Activated CD4-positive, alpha-beta memory T cell treated with anti-CD3 and anti-CD28 coated beads, Interleukin-2, amount 10 ng/mL, durations not matched to agents 7 days and 5 days (primary cell): ENCODE measurements at regions of chr3 and their contacts with region 1.

Region 1: GRCh38 chr3:179071550-179072397 is at the start of gene ZMAT3:
- DNase-seq: peak; percentile 84
- H3K4me3 Mint-ChIP-seq: peak within 1 kb of the TSS; percentile 96
- H3K27ac Mint-ChIP-seq: peak within 1 kb of the TSS; percentile 87
- H3K4me1 Mint-ChIP-seq: peaks cover 49% of the 10 kb centered on the region
- H3K27me3 Mint-ChIP-seq: no peaks in the 10 kb centered on the region
- total RNA-seq, gene ZMAT3: 12.3 to 13.9 TPM

Region 2: GRCh38 chr3:178762385-178762784 is 309.4 kb before region 1 on chr3:
- CTCF ChIA-PET with region 1: no interaction called
- POLR2A ChIA-PET with region 1: no interaction called
- DNase-seq: no peak
- H3K4me3 Mint-ChIP-seq: no peak overlapping the region
- H3K27ac Mint-ChIP-seq: no peak overlapping the region
- H3K4me1 Mint-ChIP-seq: no peaks in the 10 kb centered on the region
- H3K27me3 Mint-ChIP-seq: no peaks in the 10 kb centered on the region

Region 3: DNA sequence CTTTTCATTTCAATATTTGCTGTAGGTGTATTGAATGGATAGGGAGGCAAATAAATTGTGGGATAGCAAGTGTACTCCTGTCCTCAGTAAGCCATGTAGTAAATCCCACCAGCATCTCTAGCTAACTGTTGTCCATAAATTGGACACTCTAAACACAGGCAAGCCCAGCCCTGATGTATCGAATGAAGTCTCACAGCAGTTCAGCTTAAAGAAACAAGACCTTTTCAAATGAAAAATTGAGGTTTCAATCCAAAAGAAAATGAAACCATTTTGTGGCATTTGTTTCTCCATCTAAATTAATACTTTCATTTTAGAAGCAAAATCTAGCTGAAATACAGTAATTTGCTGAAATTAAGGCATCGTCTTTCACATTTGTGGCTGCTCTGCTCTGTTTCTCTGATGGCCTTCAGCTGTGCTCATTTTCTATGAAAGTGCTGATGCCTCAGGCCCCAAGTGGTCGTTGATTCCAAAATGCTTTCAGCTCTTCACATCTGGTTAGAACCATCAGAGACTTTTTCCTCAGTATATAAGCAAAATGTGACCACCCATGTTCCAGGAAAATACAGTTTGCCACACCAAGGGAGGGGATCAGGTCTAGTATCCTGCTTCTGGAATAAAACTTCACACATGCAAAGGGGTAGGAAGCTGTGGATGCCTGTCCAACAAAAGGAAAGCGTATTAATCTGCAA is 245.2 kb before region 1 on chr3:
- CTCF ChIA-PET with region 1: no interaction called
- POLR2A ChIA-PET with region 1: no interaction called
- DNase-seq: no peak
- H3K4me3 Mint-ChIP-seq: no peak overlapping the region
- H3K27ac Mint-ChIP-seq: no peak overlapping the region
- H3K4me1 Mint-ChIP-seq: no peaks in the 10 kb centered on the region
- H3K27me3 Mint-ChIP-seq: no peaks in the 10 kb centered on the region

Region 4: DNA sequence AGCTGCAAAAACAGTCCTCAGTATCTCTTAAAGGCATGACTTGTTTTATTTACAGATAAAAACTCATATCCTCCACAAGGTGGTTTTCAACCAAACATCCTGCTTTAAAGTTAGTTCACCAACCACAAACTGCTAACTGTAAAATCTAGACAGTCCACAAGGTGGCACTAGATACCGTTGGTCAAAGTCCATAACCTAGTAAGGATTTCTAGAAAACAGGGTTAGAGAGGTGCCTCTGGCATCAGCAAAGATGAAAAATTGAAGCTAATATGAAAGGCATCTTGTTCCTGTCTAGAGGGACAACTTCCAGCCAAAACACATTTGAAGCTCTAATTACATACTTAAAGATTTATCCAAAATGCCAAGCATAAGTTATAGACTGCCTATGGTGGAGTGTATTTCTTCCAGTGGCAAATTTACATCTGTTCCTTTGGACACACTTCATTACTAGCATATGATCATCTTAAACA is 56.2 kb before region 1 on chr3:
- CTCF ChIA-PET with region 1: interaction called, 21 read pairs
- POLR2A ChIA-PET with region 1: interaction called, 11 read pairs
- DNase-seq: peak; percentile 67
- H3K4me3 Mint-ChIP-seq: no peak overlapping the region
- H3K27ac Mint-ChIP-seq: peak overlapping the region; percentile 45
- H3K4me1 Mint-ChIP-seq: peaks cover 40% of the 10 kb centered on the region
- H3K27me3 Mint-ChIP-seq: peaks cover 10% of the 10 kb centered on the region

Region 5: DNA sequence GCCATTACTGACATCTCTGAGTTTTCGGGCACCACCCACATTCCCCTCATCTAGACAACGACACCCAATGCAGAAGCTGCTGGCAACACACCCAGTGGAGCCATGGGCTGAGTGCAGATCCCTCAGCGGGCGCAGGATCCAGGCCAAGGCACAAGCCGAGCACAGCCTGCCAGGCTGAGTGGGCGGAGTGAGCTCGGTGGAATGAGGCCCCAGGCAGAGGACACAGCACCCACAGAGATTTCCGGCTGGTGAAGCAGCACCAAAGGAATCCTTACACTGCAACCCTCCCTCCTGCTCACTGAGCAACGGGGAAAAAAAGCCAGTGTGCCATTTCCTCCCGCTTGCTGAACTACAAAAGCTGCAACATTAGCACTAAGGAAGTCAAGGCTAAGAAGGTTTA is 34.4 kb before region 1 on chr3:
- CTCF ChIA-PET with region 1: interaction called, 5 read pairs
- POLR2A ChIA-PET with region 1: interaction called, 13 read pairs
- DNase-seq: peak; percentile 69
- H3K4me3 Mint-ChIP-seq: peak overlapping the region; percentile 18
- H3K27ac Mint-ChIP-seq: peak overlapping the region; percentile 74
- H3K4me1 Mint-ChIP-seq: peaks cover 3% of the 10 kb centered on the region
- H3K27me3 Mint-ChIP-seq: no peaks in the 10 kb centered on the region

Region 6: DNA sequence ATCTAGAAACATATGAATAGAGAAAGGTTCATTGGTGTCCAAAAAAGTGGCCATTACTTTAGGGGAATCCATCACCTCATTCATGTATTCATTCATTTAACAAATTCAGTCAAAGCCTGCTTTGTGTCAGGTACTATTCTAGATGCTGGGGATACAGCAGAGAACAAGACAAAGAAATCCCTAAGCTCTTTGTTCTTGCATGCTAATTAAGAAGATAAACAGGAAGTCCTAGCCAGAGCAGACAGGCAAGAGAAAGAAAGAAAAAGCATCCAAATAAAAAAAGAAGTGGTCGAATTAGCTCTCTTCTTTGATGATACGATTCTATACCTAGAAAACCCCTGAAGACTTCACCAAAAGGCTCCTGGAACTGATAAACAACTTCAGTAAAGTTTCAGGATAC is 12.2 kb after region 1 on chr3:
- CTCF ChIA-PET with region 1: interaction called, 9 read pairs
- POLR2A ChIA-PET with region 1: interaction called, 47 read pairs
- DNase-seq: no peak
- H3K4me3 Mint-ChIP-seq: peak overlapping the region; percentile 28
- H3K27ac Mint-ChIP-seq: peak overlapping the region; percentile 26
- H3K4me1 Mint-ChIP-seq: peaks cover 15% of the 10 kb centered on the region
- H3K27me3 Mint-ChIP-seq: no peaks in the 10 kb centered on the region

Region 7: GRCh38 chr3:179098388-179099077 is 26.8 kb after region 1 on chr3:
- CTCF ChIA-PET with region 1: interaction called, 14 read pairs
- POLR2A ChIA-PET with region 1: interaction called, 3 read pairs
- DNase-seq: no peak
- H3K4me3 Mint-ChIP-seq: no peak overlapping the region
- H3K27ac Mint-ChIP-seq: no peak overlapping the region
- H3K4me1 Mint-ChIP-seq: peaks cover 5% of the 10 kb centered on the region
- H3K27me3 Mint-ChIP-seq: peaks cover 3% of the 10 kb centered on the region

Region 8: GRCh38 chr3:179147873-179148615 is 76.3 kb after region 1 on chr3 and contains the start of gene PIK3CA:
- CTCF ChIA-PET with region 1: interaction called, 6 read pairs
- POLR2A ChIA-PET with region 1: interaction called, 35 read pairs
- DNase-seq: peak; percentile 96
- H3K4me3 Mint-ChIP-seq: peak within 1 kb of the TSS; percentile 95
- H3K27ac Mint-ChIP-seq: peak within 1 kb of the TSS; percentile 92
- H3K4me1 Mint-ChIP-seq: peaks cover 32% of the 10 kb centered on the region
- H3K27me3 Mint-ChIP-seq: peaks cover 22% of the 10 kb centered on the region
- total RNA-seq, gene PIK3CA: 25.9 to 26.2 TPM

Region 9: DNA sequence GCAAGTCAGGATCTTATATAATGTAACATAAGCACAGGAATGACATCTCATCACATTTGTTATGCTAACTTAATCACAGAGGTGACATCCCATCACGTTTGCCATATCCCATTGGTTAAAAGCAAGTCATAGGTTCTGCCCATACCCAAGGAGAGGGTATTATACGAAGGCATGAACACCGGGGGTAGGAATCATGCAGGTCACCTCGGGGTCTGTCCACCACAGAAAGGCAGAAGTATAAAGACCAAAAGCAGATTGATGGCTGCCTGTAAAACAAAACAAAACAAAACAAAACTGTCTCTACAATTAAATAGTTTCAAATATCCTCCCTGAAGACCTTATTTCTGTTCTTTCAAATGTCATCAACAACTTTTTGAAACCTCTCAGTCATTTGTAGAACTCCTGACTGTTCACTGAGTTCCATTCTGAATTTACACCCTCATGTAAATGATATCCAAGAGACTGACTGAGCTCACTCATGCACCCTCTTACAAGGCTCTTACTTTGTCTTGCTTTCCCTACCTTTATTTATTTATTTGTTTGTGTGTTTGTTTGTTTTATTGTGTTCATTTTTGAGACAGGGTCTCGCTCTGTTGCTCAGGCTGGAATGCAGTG is 228.3 kb after region 1 on chr3:
- CTCF ChIA-PET with region 1: no interaction called
- POLR2A ChIA-PET with region 1: no interaction called
- DNase-seq: no peak
- H3K4me3 Mint-ChIP-seq: no peak overlapping the region
- H3K27ac Mint-ChIP-seq: no peak overlapping the region
- H3K4me1 Mint-ChIP-seq: peaks cover 2% of the 10 kb centered on the region
- H3K27me3 Mint-ChIP-seq: peaks cover 14% of the 10 kb centered on the region

Region 10: GRCh38 chr3:179322286-179323196 is 250.8 kb after region 1 on chr3 and contains the start of gene ZNF639:
- CTCF ChIA-PET with region 1: interaction called, 39 read pairs
- POLR2A ChIA-PET with region 1: interaction called, 33 read pairs
- DNase-seq: peak; percentile 81
- H3K4me3 Mint-ChIP-seq: peak within 1 kb of the TSS; percentile 84
- H3K27ac Mint-ChIP-seq: peak within 1 kb of the TSS; percentile 84
- H3K4me1 Mint-ChIP-seq: peaks cover 25% of the 10 kb centered on the region
- H3K27me3 Mint-ChIP-seq: peaks cover 10% of the 10 kb centered on the region
- total RNA-seq, gene ZNF639: 29.8 to 31.5 TPM

Region 11: GRCh38 chr3:179376474-179376873 is 304.7 kb after region 1 on chr3:
- CTCF ChIA-PET with region 1: no interaction called
- POLR2A ChIA-PET with region 1: no interaction called
- DNase-seq: no peak
- H3K4me3 Mint-ChIP-seq: no peak overlapping the region
- H3K27ac Mint-ChIP-seq: no peak overlapping the region
- H3K4me1 Mint-ChIP-seq: no peaks in the 10 kb centered on the region
- H3K27me3 Mint-ChIP-seq: no peaks in the 10 kb centered on the region